ENCODE measurements at regions of chr7 and their contacts with region 1.

Region 1: GRCh38 chr7:154913638-154914312 is 89.1 kb downstream of the PAXIP1 start:
- DNase-seq: peak; percentile 86 to 96 (median 94)
- ATAC-seq: peak; percentile 91 to 94
- H3K4me3 ChIP-seq: peak overlapping the region; percentile 16
- H3K27ac ChIP-seq: no peak overlapping the region
- H3K4me1 ChIP-seq: no peaks in the 10 kb centered on the region
- H3K27me3 ChIP-seq: no peaks in the 10 kb centered on the region

Region 2: DNA sequence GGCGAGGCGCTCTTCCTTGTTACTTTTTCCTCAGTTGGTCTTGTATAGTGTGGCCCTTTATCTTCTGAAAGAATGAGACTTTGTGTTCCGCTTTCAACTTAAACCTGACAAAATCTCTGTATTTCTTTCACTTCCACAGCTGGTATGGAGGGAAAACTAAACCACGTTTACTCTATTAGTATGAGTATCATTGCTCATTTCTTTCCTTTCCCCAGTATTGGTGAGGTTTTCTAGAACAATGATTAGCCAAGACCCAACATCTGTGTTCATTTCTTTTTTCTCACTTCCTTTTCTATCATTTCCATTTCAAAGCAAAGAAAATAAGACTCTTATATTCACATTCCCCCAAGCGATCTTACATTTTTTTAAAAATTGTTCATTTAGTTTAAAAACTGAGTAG is 76.2 kb before region 1 on chr7:
- intact Hi-C with region 1: no loop called
- DNase-seq: no peak
- ATAC-seq: no peak
- H3K4me3 ChIP-seq: no peak overlapping the region
- H3K27ac ChIP-seq: no peak overlapping the region
- H3K4me1 ChIP-seq: no peaks in the 10 kb centered on the region
- H3K27me3 ChIP-seq: no peaks in the 10 kb centered on the region

Region 3: DNA sequence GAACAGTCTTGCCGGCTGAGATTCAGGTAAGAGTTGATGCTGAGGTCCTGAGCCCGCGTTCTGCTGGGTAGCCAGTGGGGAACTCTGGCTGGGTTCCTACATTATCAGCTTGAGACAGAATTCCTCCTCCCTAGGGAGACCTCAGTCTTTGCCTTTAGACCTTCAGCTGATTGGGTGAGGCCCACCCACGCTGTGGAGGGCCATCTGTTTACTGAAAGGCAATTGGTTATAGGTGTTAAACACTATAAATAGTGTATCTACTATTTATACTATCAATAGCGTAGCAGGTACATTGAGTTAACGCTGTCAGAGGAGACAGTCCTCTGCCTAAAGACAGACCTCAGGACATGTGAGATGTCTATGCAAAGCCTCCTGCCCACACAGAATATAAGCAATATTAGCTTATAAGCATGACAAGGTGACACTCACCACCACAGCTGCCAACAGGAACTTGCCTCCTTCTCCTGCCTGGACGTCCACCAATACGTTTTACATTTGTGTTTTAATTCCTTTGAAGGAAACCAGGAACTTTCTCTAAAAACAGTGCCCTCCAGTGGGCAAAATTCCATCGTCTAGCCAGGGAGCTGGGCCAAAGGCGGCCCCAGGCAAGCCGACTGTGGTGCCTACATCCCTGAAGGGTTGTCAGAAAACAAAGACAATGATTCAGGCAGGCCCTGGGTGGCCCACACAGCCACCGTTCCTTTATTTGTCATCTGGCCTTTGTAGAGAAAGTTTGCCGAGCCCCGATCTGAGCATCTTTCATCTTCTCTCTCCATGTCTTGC is 442.7 kb after region 1 on chr7:
- intact Hi-C with region 1: loop called in 1 of 4 experiments (anchors 10 kb)
- DNase-seq: no peak
- ATAC-seq: no peak
- H3K4me3 ChIP-seq: no peak overlapping the region
- H3K27ac ChIP-seq: no peak overlapping the region
- H3K4me1 ChIP-seq: no peaks in the 10 kb centered on the region
- H3K27me3 ChIP-seq: no peaks in the 10 kb centered on the region

Measured in right cardiac atrium (tissue), 5 donors.